A549 (cell line): ENCODE measurements at regions of chr11 and their contacts with region 1.

Region 1: DNA sequence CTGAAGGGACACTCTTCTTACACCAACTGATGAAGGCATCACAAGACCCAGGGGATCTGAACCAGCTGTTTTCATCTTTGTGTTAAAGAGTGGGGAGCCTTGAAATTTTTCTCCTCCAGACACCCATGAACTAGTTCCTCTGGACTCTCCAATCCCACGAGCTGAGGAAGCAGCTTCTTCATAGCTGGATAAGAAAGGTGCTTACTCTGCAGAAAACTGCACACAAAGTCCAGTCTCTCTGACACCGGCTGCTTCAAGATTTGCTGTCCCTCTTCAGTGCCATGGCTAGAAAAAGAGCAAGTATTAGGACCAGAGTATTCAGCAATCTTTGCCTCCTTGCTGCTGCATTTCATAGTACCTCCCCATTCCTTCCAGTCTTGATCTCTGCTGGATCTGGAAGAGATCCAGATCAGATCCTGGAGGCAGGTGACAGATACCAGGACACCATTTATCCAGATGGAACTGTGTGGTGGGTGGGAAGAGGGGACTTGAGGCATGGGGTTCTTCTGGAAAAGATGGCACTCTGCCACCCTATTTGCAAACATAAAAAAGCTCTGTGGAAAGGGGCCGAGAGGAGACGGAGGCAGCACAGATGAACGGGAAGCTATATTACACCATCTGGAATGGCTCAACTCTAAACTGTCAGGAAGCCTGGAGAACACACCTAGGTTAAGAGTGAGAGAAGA is 25.5 kb downstream of the IL18BP start:
- DNase-seq: no peak
- ATAC-seq: no peak
- H3K4me3 ChIP-seq: no peak overlapping the region
- H3K27ac ChIP-seq: peak overlapping the region; percentile 65 to 80; a peak in 5 of 6 replicates
- H3K4me1 ChIP-seq: peaks cover 12% of the 10 kb centered on the region
- CTCF ChIP-seq: no peak
- EP300 ChIP-seq: no peak
- POLR2A ChIP-seq: no peak
- RAD21 ChIP-seq: no peak

Region 2: DNA sequence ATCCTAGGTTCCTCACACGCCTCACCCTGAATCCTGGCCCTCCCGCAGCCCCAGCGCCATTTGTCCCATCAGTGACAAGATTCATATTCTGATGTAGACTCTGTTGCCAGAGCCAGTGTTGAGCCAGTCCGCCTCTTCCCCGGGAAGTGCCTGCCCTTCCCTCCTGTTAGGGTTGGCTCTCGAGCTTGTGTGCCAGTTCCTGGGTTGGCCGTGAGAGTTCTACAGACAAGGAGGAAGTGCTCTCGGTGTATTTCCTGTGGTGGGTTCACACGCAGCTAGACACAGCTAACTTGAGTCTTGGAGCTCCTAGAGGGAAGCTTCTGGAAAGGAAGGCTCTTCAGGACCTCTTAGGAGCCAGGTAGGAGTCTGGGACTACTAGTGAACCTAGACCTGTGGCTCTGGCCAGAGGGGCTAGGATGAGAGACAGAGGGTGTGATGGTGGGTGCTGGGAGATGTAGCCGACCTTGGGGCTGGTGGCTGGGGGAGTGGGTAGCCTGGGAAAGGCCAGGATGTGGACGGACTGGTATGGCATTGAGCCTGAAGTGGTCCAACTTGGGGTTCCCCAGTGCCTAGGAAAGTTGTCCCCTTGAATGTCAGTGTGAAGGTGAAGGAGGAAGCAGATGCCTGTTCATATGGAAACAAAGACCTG is 25.4 kb before region 1 on chr11 and contains the start of gene IL18BP:
- CTCF ChIA-PET with region 1: interaction called, 21 read pairs
- POLR2A ChIA-PET with region 1: no interaction called
- DNase-seq: no peak
- ATAC-seq: no peak
- H3K4me3 ChIP-seq: no peak within 1 kb of the TSS
- H3K27ac ChIP-seq: peak within 1 kb of the TSS in 1 of 2 experiments; percentile 52; a peak in 2 of 6 replicates
- H3K4me1 ChIP-seq: 0 out of 3 replicates have a peak, but pooled peaks cover 11% of the 10 kb centered on the region
- CTCF ChIP-seq: no peak
- EP300 ChIP-seq: no peak
- POLR2A ChIP-seq: no peak
- RAD21 ChIP-seq: no peak
- polyA plus RNA-seq, gene IL18BP: 7.6 and 7.7 TPM in 2 replicates

Region 3: GRCh38 chr11:72058416-72059034 is 34.3 kb after region 1 on chr11:
- CTCF ChIA-PET with region 1: interaction called, 15 read pairs
- POLR2A ChIA-PET with region 1: no interaction called
- DNase-seq: no peak
- ATAC-seq: no peak; a peak in 1 of 6 replicates
- H3K4me3 ChIP-seq: no peak overlapping the region
- H3K27ac ChIP-seq: no peak overlapping the region
- H3K4me1 ChIP-seq: no peaks in the 10 kb centered on the region
- CTCF ChIP-seq: no peak
- EP300 ChIP-seq: no peak
- POLR2A ChIP-seq: no peak
- RAD21 ChIP-seq: no peak

Region 4: DNA sequence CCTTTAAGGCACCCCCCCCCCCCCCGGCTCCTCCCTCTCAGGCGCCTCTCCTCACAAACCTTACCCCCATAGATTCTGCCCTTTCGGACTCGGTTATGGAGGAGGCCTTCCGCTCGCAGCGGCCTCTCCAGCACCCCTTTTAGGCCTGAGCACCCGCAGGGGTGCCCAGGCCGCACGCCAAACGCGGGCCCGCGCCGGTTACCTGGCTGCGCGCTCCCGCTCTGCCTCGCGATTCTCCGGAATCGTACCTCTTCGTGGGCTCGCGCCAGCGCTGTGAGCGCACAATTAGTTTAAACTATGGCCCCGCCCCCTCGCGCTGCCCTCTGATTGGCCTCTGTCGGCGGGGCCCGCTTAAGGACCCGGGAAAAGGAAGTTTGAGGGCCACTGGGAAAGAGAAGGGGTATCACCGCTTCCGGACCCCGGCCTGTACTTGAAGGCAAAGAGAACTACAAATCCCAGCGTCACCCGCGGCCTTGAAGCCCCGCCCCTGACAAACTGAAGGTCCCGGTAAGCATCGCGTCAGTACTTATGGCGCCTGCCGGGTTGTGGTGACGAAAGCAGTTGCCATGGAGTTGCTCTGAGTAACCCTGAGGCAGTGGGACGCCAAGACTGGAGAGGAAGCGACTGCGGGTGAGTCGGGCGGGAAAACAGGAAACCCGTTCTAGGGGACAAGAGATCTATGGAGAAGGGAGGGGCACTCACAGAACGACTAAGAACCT is 56.2 kb after region 1 on chr11 and contains the starts of genes LRRC51 and NUMA1:
- CTCF ChIA-PET with region 1: interaction called, 52 read pairs
- POLR2A ChIA-PET with region 1: interaction called, 11 read pairs
- DNase-seq: peak; percentile 91 to 100
- ATAC-seq: peak; percentile 96 to 97
- H3K4me3 ChIP-seq: peak within 1 kb of the TSS; percentile 85
- H3K27ac ChIP-seq: peak within 1 kb of the TSS; percentile 90
- H3K4me1 ChIP-seq: peaks cover 19% of the 10 kb centered on the region
- CTCF ChIP-seq: no peak
- EP300 ChIP-seq: no peak
- POLR2A ChIP-seq: peak; percentile 54
- RAD21 ChIP-seq: no peak
- polyA plus RNA-seq, gene LRRC51: 14.3 and 16.3 TPM in 2 replicates
- polyA plus RNA-seq, gene NUMA1: 51.5 and 64.6 TPM in 2 replicates

Region 5: GRCh38 chr11:72413914-72414628 is 389.9 kb after region 1 on chr11:
- CTCF ChIA-PET with region 1: interaction called, 19 read pairs
- POLR2A ChIA-PET with region 1: no interaction called
- DNase-seq: peak; percentile 76 to 81
- ATAC-seq: peak; percentile 83 to 92
- H3K4me3 ChIP-seq: no peak overlapping the region
- H3K27ac ChIP-seq: 0 out of 6 replicates have a peak overlapping the region, but pooled peaks of 1 of the 2 experiments have one; percentile 13
- H3K4me1 ChIP-seq: peaks cover 4% of the 10 kb centered on the region; the same call in 2 of the 3 replicates
- CTCF ChIP-seq: peak; percentile 92
- EP300 ChIP-seq: no peak
- POLR2A ChIP-seq: no peak
- RAD21 ChIP-seq: peak; percentile 82 to 83

Region 6: GRCh38 chr11:72546866-72547265 is 522.7 kb after region 1 on chr11:
- CTCF ChIA-PET with region 1: no interaction called
- POLR2A ChIA-PET with region 1: no interaction called
- DNase-seq: no peak
- ATAC-seq: no peak
- H3K4me3 ChIP-seq: no peak overlapping the region
- H3K27ac ChIP-seq: no peak overlapping the region
- H3K4me1 ChIP-seq: no peaks in the 10 kb centered on the region
- CTCF ChIP-seq: no peak
- EP300 ChIP-seq: no peak
- POLR2A ChIP-seq: no peak
- RAD21 ChIP-seq: no peak